K562 (cell line): ENCODE measurements at regions of chr3 and their contacts with region 1.

Region 1: GRCh38 chr3:13895155-13896105 is 15.6 kb upstream of the WNT7A start:
- DNase-seq: peak; percentile 92 to 96 (median 94)
- ATAC-seq: peak; percentile 99
- H3K4me3 ChIP-seq: peak overlapping the region; percentile 42
- H3K27ac ChIP-seq: no peak overlapping the region; the same call in 1 of the 3 replicates
- H3K4me1 ChIP-seq: peaks cover 16 to 25% of the 10 kb centered on the region in 2 experiments
- H3K27me3 ChIP-seq: peaks cover 0 to 7% of the 10 kb centered on the region in 2 experiments; a peak in 3 of 5 replicates
- CTCF ChIP-seq: no peak
- EP300 ChIP-seq: no peak
- POLR2A ChIP-seq: peak; percentile 66
- RAD21 ChIP-seq: no peak

Region 2: DNA sequence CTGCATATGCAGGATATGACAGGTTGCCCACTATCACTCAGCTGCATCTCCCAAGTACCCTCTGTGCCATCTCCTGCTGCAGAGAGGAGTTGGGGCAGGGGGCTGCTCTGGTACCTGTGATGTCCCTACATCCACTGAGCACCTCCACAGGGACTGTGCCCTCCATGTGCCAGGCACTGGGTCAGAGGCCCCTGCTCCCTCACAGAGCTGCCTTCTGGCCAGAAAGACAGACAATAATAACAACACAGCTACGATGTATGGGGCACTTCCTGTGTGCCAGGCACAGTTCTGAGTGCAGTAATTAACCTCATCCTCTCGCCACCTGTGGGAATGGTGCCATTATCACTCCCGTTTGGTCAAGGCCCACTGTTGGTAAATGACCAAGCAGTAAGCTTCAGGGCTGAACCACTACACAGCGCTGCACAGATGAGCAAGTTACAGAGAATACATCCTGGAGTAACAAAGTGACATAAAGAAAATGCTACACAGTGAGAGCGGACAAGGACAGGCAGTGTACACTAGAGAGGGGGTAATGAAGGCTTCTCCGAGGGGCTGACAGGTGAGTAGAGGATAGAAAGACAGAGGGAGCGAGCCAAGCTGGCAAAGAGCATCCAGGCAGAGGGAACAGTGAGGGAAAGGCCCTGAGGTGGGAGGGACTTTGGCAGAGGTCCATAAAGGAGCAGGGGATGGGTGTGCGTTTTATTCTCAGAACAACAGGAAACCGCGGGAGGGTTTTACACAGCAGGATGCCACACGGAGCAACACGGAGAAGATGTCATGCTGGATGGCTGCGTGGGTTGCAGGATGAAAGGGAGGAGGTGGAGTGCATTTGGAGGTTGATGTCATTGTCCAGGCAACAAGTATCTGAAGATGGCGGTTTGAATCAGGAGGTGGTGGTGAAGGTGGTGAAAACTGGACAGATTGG is 29.1 kb before region 1 on chr3:
- CTCF ChIA-PET with region 1: no interaction called
- POLR2A ChIA-PET with region 1: no interaction called
- in situ Hi-C with region 1: no loop called
- intact Hi-C with region 1: no loop called
- DNase-seq: no peak
- ATAC-seq: no peak
- H3K4me3 ChIP-seq: no peak overlapping the region
- H3K27ac ChIP-seq: no peak overlapping the region
- H3K4me1 ChIP-seq: no peaks in the 10 kb centered on the region
- H3K27me3 ChIP-seq: peaks cover 14 to 56% of the 10 kb centered on the region in 2 experiments; a peak in 4 of 5 replicates
- CTCF ChIP-seq: no peak
- EP300 ChIP-seq: no peak
- POLR2A ChIP-seq: no peak
- RAD21 ChIP-seq: no peak

Region 3: GRCh38 chr3:13950042-13950441 is 54.6 kb after region 1 on chr3:
- CTCF ChIA-PET with region 1: no interaction called
- POLR2A ChIA-PET with region 1: no interaction called
- in situ Hi-C with region 1: no loop called
- intact Hi-C with region 1: no loop called
- DNase-seq: no peak
- ATAC-seq: no peak
- H3K4me3 ChIP-seq: no peak overlapping the region
- H3K27ac ChIP-seq: no peak overlapping the region
- H3K4me1 ChIP-seq: no peaks in the 10 kb centered on the region
- H3K27me3 ChIP-seq: peaks cover 5 to 17% of the 10 kb centered on the region in 2 experiments; a peak in 4 of 5 replicates
- CTCF ChIP-seq: no peak
- EP300 ChIP-seq: no peak
- POLR2A ChIP-seq: no peak
- RAD21 ChIP-seq: no peak

Region 4: GRCh38 chr3:14113965-14114635 is 218.7 kb after region 1 on chr3:
- CTCF ChIA-PET with region 1: interaction called, 8 read pairs
- POLR2A ChIA-PET with region 1: no interaction called
- in situ Hi-C with region 1: no loop called
- intact Hi-C with region 1: loop called (anchors 2 kb)
- DNase-seq: no peak
- ATAC-seq: peak; percentile 45; the same call in 2 of the 3 replicates
- H3K4me3 ChIP-seq: no peak overlapping the region
- H3K27ac ChIP-seq: no peak overlapping the region
- H3K4me1 ChIP-seq: no peaks in the 10 kb centered on the region; a peak in 1 of 5 replicates
- H3K27me3 ChIP-seq: no peaks in the 10 kb centered on the region
- CTCF ChIP-seq: peak; percentile 18 to 59 (median 45); a peak in 5 of 6 replicates
- EP300 ChIP-seq: no peak
- POLR2A ChIP-seq: no peak
- RAD21 ChIP-seq: peak in 1 of 2 experiments; percentile 32; a peak in 2 of 4 replicates

Region 5: DNA sequence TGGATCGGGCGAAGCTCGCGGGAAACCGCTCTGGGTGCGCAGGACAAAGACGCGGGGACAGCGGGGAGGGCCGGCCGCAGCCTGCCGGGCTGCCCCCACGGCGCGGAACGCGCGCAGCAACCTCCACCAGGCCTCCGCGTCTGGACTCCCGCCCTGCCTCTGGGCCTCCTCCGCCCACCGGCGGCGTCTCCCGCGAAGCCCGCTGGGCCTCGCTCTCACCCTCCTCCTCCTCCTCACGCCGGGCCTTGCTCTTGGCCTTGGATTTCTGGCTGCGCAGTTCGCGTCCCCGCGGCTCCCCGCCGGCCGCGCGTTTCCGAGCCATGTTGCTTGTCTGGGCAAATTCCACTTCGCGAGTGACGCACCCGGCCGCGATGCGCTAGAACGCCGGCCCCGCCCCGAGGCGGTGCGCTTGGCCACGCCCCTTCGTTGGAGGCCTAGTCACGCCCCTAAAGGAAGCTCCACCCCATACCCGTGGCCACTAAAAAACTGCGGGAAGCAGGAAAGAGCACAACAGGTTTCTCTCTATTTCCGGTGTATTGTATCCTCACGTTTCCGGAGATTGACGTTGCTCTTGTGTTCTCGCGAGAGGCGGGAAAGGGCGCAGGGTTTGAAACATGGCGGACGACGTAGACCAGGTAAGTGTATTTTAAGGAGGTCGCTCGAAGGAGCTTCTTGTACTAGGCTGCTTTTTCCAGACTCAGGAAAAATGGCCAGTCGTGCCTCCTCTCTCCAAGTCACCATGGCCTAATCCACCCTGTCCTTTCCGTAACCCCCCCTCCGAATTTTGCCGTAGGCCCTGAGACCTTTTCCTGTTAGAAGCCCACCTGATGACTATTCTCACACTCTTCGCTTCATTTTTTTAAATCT is 283.1 kb after region 1 on chr3 and contains the starts of genes LSM3 and XPC:
- CTCF ChIA-PET with region 1: no interaction called
- POLR2A ChIA-PET with region 1: interaction called, 3 read pairs
- in situ Hi-C with region 1: no loop called
- intact Hi-C with region 1: loop called (anchors 5 kb)
- DNase-seq: peak; percentile 95 to 99 (median 96)
- ATAC-seq: peak; percentile 96
- H3K4me3 ChIP-seq: peak within 1 kb of the TSS; percentile 65
- H3K27ac ChIP-seq: peak within 1 kb of the TSS; percentile 89
- H3K4me1 ChIP-seq: peaks cover 13 to 41% of the 10 kb centered on the region in 2 experiments
- H3K27me3 ChIP-seq: no peaks in the 10 kb centered on the region
- CTCF ChIP-seq: peak in 2 of 3 experiments; percentile 1 to 19; a peak in 1 of 6 replicates
- EP300 ChIP-seq: no peak
- POLR2A ChIP-seq: peak; percentile 98
- RAD21 ChIP-seq: no peak
- polyA plus RNA-seq, gene LSM3: 180 to 203 TPM
- polyA plus RNA-seq, gene XPC: 3.8 to 4.1 TPM

Region 6: DNA sequence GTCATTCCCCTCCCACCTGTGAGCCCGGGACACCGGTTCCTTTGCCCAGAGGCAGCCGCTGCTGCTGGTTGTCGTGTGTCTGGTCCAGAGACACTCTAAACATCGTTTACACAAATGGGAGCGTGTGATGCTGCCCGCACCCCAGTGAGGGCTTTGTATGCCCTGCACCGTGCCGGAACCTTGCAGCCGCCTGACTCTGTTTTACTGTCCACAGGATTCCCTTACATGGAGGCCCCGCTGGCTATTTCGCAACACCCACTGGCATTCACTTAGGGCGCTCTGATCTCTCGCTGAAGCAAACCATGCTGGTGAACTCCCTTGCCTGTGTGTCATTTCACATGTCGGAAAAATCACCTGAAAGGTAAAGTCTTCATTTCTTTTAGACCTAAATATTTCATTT is 406.1 kb after region 1 on chr3:
- CTCF ChIA-PET with region 1: no interaction called
- POLR2A ChIA-PET with region 1: no interaction called
- in situ Hi-C with region 1: no loop called
- intact Hi-C with region 1: loop called (anchors 10 kb)
- DNase-seq: no peak
- ATAC-seq: no peak
- H3K4me3 ChIP-seq: no peak overlapping the region
- H3K27ac ChIP-seq: no peak overlapping the region
- H3K4me1 ChIP-seq: peaks cover 0 to 17% of the 10 kb centered on the region in 2 experiments; a peak in 2 of 5 replicates
- H3K27me3 ChIP-seq: no peaks in the 10 kb centered on the region
- CTCF ChIP-seq: no peak
- EP300 ChIP-seq: no peak
- POLR2A ChIP-seq: no peak
- RAD21 ChIP-seq: no peak

Region 7: DNA sequence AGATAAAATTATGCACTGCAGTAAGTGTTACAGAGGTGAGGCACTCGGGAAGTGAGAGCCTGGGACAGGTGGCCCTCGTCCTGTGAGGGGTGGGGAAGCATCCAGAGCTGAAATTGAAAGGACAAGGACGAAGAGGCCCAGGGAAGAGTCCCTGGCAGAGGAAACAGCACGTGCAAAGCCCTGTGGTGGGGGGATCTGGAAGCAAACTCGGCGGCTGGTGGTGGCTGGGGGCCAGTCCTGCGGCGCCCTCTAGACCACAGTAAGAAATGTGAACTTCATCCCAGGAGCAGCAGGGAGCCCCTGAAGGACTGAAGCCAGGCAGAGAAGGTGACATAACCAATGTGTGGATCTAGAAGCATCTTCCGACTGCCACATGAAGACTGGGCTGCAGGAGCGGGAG is 601.9 kb after region 1 on chr3:
- CTCF ChIA-PET with region 1: interaction called, 3 read pairs
- POLR2A ChIA-PET with region 1: no interaction called
- in situ Hi-C with region 1: no loop called
- intact Hi-C with region 1: loop called (anchors 10 kb)
- DNase-seq: peak in 2 of 4 experiments; percentile 42 to 56
- ATAC-seq: peak; percentile 80
- H3K4me3 ChIP-seq: no peak overlapping the region
- H3K27ac ChIP-seq: no peak overlapping the region
- H3K4me1 ChIP-seq: peaks cover 0 to 12% of the 10 kb centered on the region in 2 experiments; a peak in 2 of 5 replicates
- H3K27me3 ChIP-seq: peaks cover 0 to 14% of the 10 kb centered on the region in 2 experiments; a peak in 2 of 5 replicates
- CTCF ChIP-seq: peak; percentile 35 to 53 (median 48); a peak in 5 of 6 replicates
- EP300 ChIP-seq: no peak
- POLR2A ChIP-seq: no peak
- RAD21 ChIP-seq: peak; percentile 20 to 61; a peak in 2 of 4 replicates

Region 8: DNA sequence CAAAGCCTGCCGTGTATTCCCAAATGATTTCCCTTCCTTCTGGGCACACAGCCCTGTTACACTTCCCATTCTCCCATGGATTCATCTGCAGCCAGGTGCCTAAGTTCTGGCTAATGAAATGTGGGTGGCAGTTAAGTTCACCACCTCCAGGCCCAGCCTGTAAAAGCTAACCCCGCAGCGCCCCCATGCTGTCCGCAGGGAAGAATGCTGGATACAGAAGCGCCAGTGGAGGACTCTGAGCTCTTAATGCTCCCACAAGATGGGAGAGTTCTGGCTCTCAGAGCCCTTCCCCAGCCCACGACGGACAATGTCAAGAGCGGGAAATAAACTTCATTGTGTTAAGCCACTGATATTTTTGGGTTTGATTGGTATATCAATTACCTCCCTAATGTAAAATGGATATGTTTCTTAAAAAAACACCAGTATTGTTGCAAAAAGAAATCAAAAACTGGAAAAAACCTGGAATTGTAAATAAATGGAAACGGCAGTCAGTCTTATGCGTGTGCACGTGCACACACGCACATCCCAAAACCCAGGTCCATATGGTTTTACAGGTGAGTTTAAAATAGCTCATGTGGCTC is 885.6 kb after region 1 on chr3:
- CTCF ChIA-PET with region 1: no interaction called
- POLR2A ChIA-PET with region 1: no interaction called
- in situ Hi-C with region 1: no loop called
- intact Hi-C with region 1: loop called (anchors 5 kb)
- DNase-seq: peak; percentile 43 to 77 (median 60)
- ATAC-seq: peak; percentile 100
- H3K4me3 ChIP-seq: no peak overlapping the region
- H3K27ac ChIP-seq: no peak overlapping the region
- H3K4me1 ChIP-seq: no peaks in the 10 kb centered on the region
- H3K27me3 ChIP-seq: peaks cover 13 to 31% of the 10 kb centered on the region in 2 experiments
- CTCF ChIP-seq: peak; percentile 89 to 90 (median 90)
- EP300 ChIP-seq: no peak
- POLR2A ChIP-seq: no peak
- RAD21 ChIP-seq: peak; percentile 71 to 94